Panc1 (cell line): ENCODE measurements at regions of chr19 and their contacts with region 1.

Region 1: GRCh38 chr19:33689868-33690267 is 68.1 kb downstream of the CHST8 start:
- DNase-seq: no peak
- ATAC-seq: no peak
- H3K4me3 ChIP-seq: no peak overlapping the region
- H3K27ac ChIP-seq: no peak overlapping the region
- H3K4me1 ChIP-seq: no peaks in the 10 kb centered on the region
- H3K27me3 ChIP-seq: peaks cover 6% of the 10 kb centered on the region; the same call in 1 of the 2 replicates
- CTCF ChIP-seq: no peak

Region 2: DNA sequence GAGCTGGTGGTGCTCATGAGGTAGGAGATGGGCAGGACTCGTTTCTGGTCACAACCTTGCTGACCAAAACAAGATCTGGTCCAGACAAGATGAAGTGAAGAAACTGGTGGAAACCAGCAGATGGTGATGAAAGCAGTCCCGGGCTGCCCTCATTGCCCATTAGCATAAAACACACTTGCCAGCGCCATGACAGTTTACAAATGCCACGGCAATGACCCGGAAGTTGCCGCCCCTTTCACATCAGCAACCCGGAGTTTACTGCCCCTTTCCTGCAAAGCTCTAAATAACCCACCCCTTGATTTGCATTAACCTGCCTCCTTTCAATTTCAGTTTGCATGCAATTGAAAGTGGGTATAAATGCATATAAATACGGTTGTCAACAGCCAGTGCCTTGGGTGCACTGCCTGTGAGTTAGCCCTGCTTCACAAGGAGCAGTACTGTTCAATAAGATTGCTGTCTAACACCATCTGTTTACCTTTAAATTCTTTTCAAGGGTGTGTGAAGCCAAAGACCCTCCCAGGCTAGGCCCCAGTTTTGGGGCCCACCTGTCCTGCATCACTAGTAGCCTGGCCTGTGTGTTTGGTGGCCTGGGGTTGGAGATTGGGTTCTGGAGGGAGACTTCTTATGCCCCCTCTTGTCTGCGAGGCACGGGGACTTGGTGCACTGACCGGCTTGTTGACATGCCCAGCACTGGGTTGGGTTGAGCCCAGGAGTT is 29.3 kb before region 1 on chr19:
- CTCF ChIA-PET with region 1: no interaction called
- POLR2A ChIA-PET with region 1: no interaction called
- in situ Hi-C with region 1: no loop called
- intact Hi-C with region 1: loop called (anchors 1 kb)
- DNase-seq: no peak
- ATAC-seq: no peak
- H3K4me3 ChIP-seq: peak overlapping the region in 1 of 2 experiments; percentile 24; a peak in 1 of 4 replicates
- H3K27ac ChIP-seq: no peak overlapping the region
- H3K4me1 ChIP-seq: no peaks in the 10 kb centered on the region
- H3K27me3 ChIP-seq: peaks cover 6% of the 10 kb centered on the region; the same call in 1 of the 2 replicates
- CTCF ChIP-seq: no peak

Region 3: DNA sequence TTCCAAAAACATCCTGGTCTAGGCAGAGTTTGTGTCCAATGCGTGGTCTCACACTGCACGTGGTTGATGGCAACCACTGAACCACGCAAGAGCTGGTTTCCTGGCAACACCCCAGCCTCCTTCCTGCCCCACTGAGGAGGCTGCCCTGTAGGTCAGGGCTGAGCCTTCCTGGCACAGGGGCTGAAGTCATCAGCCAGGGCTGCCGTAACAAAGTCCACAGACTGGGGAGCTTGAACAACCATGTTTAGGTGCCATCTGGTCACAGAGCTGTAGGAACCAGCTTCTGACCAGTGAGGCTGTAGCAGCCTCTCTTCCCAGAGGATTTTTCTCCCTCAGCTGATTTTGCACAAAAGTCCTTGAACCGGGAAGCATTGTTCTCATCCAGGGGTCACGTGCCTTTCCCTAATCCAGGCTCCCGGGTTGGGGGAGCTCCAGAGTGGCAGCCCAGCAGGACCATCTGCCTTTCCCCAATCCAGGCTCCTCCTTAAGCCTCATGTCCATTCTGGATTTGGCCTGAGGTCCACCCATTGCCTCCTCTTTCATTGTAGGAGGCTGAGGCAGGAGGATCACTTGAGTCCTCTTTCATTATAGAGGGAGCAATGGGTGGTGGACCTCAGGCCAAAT is 14.3 kb before region 1 on chr19:
- CTCF ChIA-PET with region 1: no interaction called
- POLR2A ChIA-PET with region 1: no interaction called
- in situ Hi-C with region 1: no loop called
- intact Hi-C with region 1: no loop called
- DNase-seq: no peak
- ATAC-seq: no peak
- H3K4me3 ChIP-seq: no peak overlapping the region
- H3K27ac ChIP-seq: no peak overlapping the region
- H3K4me1 ChIP-seq: no peaks in the 10 kb centered on the region
- H3K27me3 ChIP-seq: peaks cover 19% of the 10 kb centered on the region
- CTCF ChIP-seq: no peak

Region 4: GRCh38 chr19:33740811-33741396 is 51.0 kb after region 1 on chr19:
- CTCF ChIA-PET with region 1: no interaction called
- POLR2A ChIA-PET with region 1: no interaction called
- in situ Hi-C with region 1: no loop called
- intact Hi-C with region 1: no loop called
- DNase-seq: no peak
- ATAC-seq: no peak
- H3K4me3 ChIP-seq: no peak overlapping the region
- H3K27ac ChIP-seq: no peak overlapping the region
- H3K4me1 ChIP-seq: no peaks in the 10 kb centered on the region
- H3K27me3 ChIP-seq: peaks cover 47% of the 10 kb centered on the region
- CTCF ChIP-seq: no peak

Region 5: DNA sequence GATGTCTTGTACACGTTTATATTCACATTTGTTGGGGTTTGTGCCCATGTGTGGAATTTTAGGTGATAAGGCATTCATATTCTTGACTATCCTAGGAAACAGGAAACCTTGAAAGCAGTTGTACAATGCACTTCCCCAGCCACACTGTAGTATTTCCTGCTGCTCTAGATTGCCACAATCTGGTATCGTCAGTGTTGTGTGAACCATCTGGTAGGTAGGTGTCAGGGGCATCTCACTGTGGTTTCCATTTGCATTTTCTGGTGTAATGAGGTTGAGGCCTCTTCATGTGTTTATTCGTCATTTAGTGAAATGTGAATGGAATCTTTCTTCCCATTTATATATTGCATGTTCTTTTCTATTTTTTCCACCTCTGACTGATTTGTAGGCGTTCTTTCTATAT is 910.5 kb after region 1 on chr19:
- CTCF ChIA-PET with region 1: no interaction called
- POLR2A ChIA-PET with region 1: no interaction called
- in situ Hi-C with region 1: no loop called
- intact Hi-C with region 1: no loop called
- DNase-seq: no peak
- ATAC-seq: no peak
- H3K4me3 ChIP-seq: no peak overlapping the region
- H3K27ac ChIP-seq: no peak overlapping the region
- H3K4me1 ChIP-seq: no peaks in the 10 kb centered on the region
- H3K27me3 ChIP-seq: no peaks in the 10 kb centered on the region
- CTCF ChIP-seq: no peak